ENCODE measurements at regions of chr1 and their contacts with region 1.

Region 1: GRCh38 chr1:184810735-184811343 is 56.2 kb upstream of the EDEM3 start:
- DNase-seq: no peak
- H3K4me3 ChIP-seq: no peak overlapping the region
- H3K27ac ChIP-seq: no peak overlapping the region
- H3K4me1 ChIP-seq: no peaks in the 10 kb centered on the region
- H3K27me3 ChIP-seq: no peaks in the 10 kb centered on the region
- CTCF ChIP-seq: no peak
- EP300 ChIP-seq: no peak
- POLR2A ChIP-seq: no peak

Region 2: GRCh38 chr1:184973272-184974055 is 162.6 kb after region 1 on chr1:
- intact Hi-C with region 1: loop called in 1 of 4 experiments (anchors 2 kb)
- DNase-seq: peak in 3 of 5 donors; percentile 18 to 42 (median 23)
- H3K4me3 ChIP-seq: peak overlapping the region; percentile 71
- H3K27ac ChIP-seq: peak overlapping the region in 1 of 2 donors; percentile 64
- H3K4me1 ChIP-seq: peaks cover 4% of the 10 kb centered on the region
- H3K27me3 ChIP-seq: no peaks in the 10 kb centered on the region
- CTCF ChIP-seq: no peak
- EP300 ChIP-seq: no peak
- POLR2A ChIP-seq: no peak